ENCODE measurements at regions of chr1 and their contacts with region 1.

Region 1: DNA sequence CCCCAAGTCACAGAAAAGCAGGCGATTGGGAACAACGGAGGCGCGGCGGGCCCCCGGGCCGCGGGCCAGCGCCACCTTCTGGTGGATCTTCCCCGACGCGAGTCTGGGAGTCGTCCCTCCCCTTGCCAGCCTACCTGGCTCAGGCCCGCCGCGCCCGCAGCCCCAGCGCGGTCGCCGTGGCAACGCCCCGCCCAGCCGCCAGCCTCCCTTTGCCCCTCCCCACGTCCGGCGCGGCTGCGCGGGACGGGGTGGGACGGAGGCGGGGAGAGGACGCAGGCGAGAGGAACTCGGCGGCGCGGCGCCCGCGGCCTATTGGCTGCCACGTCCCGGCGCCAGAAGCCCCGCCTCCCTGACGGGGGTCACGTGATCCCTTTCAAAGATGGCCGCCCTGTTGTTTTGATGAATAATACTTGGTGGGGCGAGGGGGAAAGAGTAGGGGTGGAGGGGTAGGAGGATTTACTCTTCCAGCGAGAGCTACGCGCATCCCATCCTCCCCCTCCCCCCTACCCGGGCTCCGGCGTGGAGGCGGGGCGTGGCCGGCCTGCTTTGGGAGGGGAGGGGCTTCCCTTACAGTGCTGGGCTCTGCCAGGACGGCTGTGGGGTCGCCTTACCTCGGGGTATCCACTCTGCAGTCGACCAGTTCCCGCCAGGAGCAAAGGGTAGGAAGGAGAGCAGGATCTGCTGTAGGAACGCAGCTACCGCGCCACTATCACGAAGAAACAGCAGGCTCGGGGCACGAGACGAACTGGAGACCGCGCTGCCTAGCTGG is at the start of gene UBE4B:
- DNase-seq: peak; percentile 98
- H3K4me3 ChIP-seq: peak within 1 kb of the TSS; percentile 79 to 99 (median 90)
- H3K27ac ChIP-seq: peak within 1 kb of the TSS; percentile 85
- H3K4me1 ChIP-seq: peaks cover 3% of the 10 kb centered on the region
- H3K27me3 ChIP-seq: no peaks in the 10 kb centered on the region
- CTCF ChIP-seq: peak; percentile 62 to 90
- total RNA-seq, gene UBE4B: 34.7 to 47.2 TPM

Region 2: DNA sequence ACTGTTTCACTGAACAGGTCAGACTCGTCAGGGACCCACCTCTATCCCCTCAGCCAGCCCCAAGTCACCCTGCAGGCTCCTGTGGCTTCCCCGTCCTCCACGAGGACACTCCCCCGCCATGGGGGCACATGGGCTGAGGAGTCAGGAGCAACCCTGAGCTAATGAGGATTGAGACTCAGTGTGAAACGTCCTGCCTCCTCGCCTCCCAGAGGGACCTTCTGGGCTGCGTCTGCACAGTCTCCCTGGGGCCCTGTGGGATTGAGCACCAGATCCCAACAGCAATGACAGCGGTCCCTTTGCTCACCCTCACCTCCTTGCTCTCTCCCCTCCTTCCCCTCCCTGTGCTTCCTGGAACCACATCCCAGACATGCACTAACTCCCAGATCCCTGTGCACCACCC is 512.4 kb before region 1 on chr1:
- CTCF ChIA-PET with region 1: no interaction called
- dilution Hi-C with region 1: no loop called
- in situ Hi-C with region 1: no loop called
- intact Hi-C with region 1: no loop called
- DNase-seq: no peak
- H3K4me3 ChIP-seq: no peak overlapping the region
- H3K27ac ChIP-seq: no peak overlapping the region
- H3K4me1 ChIP-seq: no peaks in the 10 kb centered on the region
- H3K27me3 ChIP-seq: no peaks in the 10 kb centered on the region
- CTCF ChIP-seq: no peak

Region 3: GRCh38 chr1:9874959-9875635 is 157.7 kb before region 1 on chr1:
- CTCF ChIA-PET with region 1: no interaction called
- dilution Hi-C with region 1: no loop called
- in situ Hi-C with region 1: no loop called
- intact Hi-C with region 1: loop called (anchors 2 kb)
- DNase-seq: peak; percentile 49
- H3K4me3 ChIP-seq: no peak overlapping the region
- H3K27ac ChIP-seq: no peak overlapping the region
- H3K4me1 ChIP-seq: peaks cover 35% of the 10 kb centered on the region
- H3K27me3 ChIP-seq: no peaks in the 10 kb centered on the region
- CTCF ChIP-seq: peak; percentile 79 to 97

Region 4: DNA sequence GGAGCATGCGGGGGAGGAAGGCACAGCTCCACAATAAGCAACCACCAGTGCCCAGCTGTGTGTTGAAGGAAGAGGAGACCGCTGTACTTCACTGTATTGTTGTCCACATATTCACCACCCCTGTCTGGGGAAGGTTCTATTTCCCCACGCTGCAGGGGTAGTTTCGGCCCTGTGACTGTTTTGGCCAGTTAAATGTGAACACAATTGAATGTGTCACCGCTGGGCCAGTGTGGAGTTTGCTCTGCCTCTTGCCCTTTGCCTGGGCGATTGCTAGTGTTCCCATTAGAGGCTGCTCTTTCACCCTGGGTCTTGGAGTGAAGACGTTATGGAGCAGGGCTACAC is 32.5 kb after region 1 on chr1:
- CTCF ChIA-PET with region 1: no interaction called
- dilution Hi-C with region 1: no loop called
- in situ Hi-C with region 1: no loop called
- intact Hi-C with region 1: loop called (anchors 2 kb)
- DNase-seq: no peak
- H3K4me3 ChIP-seq: no peak overlapping the region
- H3K27ac ChIP-seq: peak overlapping the region; percentile 92
- H3K4me1 ChIP-seq: peaks cover 50% of the 10 kb centered on the region
- H3K27me3 ChIP-seq: no peaks in the 10 kb centered on the region
- CTCF ChIP-seq: no peak

Region 5: GRCh38 chr1:10108134-10108663 is 75.4 kb after region 1 on chr1:
- CTCF ChIA-PET with region 1: no interaction called
- dilution Hi-C with region 1: loop called (anchors 5 kb)
- in situ Hi-C with region 1: no loop called
- intact Hi-C with region 1: loop called (anchors 2 kb)
- DNase-seq: peak; percentile 88
- H3K4me3 ChIP-seq: no peak overlapping the region
- H3K27ac ChIP-seq: peak overlapping the region; percentile 50
- H3K4me1 ChIP-seq: peaks cover 26% of the 10 kb centered on the region
- H3K27me3 ChIP-seq: no peaks in the 10 kb centered on the region
- CTCF ChIP-seq: no peak

Region 6: DNA sequence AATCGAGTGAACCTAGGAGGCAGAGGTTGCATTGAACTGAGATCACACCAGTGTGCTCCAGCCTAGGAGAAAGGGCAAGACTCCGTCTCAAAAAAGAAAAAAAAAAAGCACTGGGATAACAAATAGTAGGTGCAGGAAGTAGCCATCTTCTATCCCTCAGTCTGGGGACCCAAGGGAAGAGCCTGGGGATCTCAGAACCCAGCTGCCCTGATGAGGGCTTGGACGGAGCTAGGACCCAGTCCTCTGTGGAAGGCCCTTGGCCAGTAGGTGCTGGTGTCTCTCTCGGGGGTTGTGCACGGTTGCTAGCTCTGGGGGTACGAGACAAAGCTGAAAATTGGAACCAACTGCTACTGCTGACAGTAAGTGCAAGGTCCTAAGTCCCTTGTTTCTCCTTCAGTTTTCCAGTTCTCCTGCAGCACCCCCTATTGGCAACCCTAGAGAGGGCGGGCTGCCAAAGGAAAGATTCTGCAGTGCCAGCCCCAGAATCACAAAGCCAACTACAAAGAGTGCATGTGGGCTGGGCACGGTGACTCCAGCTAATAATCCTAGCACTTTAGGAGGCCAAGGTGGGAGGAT is 120.0 kb after region 1 on chr1:
- CTCF ChIA-PET with region 1: no interaction called
- dilution Hi-C with region 1: no loop called
- in situ Hi-C with region 1: no loop called
- intact Hi-C with region 1: loop called (anchors 1 kb)
- DNase-seq: peak; percentile 40
- H3K4me3 ChIP-seq: no peak overlapping the region
- H3K27ac ChIP-seq: no peak overlapping the region
- H3K4me1 ChIP-seq: no peaks in the 10 kb centered on the region
- H3K27me3 ChIP-seq: no peaks in the 10 kb centered on the region
- CTCF ChIP-seq: peak; percentile 71 to 81